ENCODE measurements at regions of chr10 and their contacts with region 1.

Region 1: GRCh38 chr10:123392182-123392963 is 238.2 kb downstream of the BUB3 start:
- DNase-seq: no peak
- ATAC-seq: peak; percentile 84
- H3K4me3 Mint-ChIP-seq: no peak overlapping the region
- H3K27ac Mint-ChIP-seq: no peak overlapping the region
- H3K4me1 Mint-ChIP-seq: peaks cover 3% of the 10 kb centered on the region
- H3K27me3 Mint-ChIP-seq: no peaks in the 10 kb centered on the region
- CTCF ChIP-seq: no peak

Region 2: GRCh38 chr10:123402656-123403055 is 10.3 kb after region 1 on chr10:
- CTCF ChIA-PET with region 1: no interaction called
- POLR2A ChIA-PET with region 1: interaction called, 9 read pairs
- intact Hi-C with region 1: loop called (anchors 1 kb)
- DNase-seq: no peak
- ATAC-seq: peak; percentile 92
- H3K4me3 Mint-ChIP-seq: peak overlapping the region; percentile 59
- H3K27ac Mint-ChIP-seq: peak overlapping the region; percentile 85
- H3K4me1 Mint-ChIP-seq: peaks cover 56% of the 10 kb centered on the region
- H3K27me3 Mint-ChIP-seq: no peaks in the 10 kb centered on the region
- CTCF ChIP-seq: no peak

Region 3: DNA sequence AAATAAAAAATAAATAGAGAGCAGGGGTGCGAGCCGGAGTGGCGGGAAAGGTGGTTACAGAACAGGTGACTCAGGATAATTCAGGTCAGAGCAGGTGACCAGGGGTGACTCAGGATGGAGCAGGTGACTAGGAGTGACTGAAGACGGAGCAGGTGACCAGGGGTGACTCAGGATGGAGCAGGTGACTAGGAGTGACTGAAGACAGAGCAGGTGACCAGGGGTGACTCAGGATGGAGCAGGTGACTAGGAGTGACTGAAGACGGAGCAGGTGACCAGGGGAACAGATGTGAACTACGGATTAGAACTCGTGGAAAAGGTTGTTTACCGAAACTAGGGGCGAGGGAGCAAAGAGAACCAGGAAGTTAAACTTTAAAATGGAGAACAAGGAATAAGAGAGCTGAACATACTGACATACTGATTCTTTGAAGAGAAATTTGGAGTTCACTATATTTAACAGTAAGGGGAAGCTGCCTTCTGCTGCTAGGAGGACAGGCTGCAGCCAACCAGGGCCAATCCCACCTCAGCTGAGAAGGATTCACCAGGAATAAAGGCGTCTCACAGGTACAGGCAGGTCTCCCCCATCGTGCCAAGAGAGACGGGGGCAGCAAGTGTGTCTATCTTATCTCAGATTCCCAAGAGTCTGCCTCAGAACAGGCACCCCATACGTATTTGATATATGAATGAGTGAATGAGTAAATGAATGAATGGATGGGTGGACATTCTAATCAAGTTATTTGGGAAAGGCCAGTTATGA is 397.9 kb after region 1 on chr10:
- CTCF ChIA-PET with region 1: no interaction called
- POLR2A ChIA-PET with region 1: no interaction called
- intact Hi-C with region 1: no loop called
- DNase-seq: no peak
- ATAC-seq: no peak
- H3K4me3 Mint-ChIP-seq: no peak overlapping the region
- H3K27ac Mint-ChIP-seq: no peak overlapping the region
- H3K4me1 Mint-ChIP-seq: no peaks in the 10 kb centered on the region
- H3K27me3 Mint-ChIP-seq: peaks cover 17% of the 10 kb centered on the region
- CTCF ChIP-seq: no peak

Measured in activated B cell treated with CpG ODN at 0.5 μM for 24 hours (primary cell).